Transverse colon (tissue), 4 donors: ENCODE measurements at regions of chr14 and their contacts with region 1.

Region 1: DNA sequence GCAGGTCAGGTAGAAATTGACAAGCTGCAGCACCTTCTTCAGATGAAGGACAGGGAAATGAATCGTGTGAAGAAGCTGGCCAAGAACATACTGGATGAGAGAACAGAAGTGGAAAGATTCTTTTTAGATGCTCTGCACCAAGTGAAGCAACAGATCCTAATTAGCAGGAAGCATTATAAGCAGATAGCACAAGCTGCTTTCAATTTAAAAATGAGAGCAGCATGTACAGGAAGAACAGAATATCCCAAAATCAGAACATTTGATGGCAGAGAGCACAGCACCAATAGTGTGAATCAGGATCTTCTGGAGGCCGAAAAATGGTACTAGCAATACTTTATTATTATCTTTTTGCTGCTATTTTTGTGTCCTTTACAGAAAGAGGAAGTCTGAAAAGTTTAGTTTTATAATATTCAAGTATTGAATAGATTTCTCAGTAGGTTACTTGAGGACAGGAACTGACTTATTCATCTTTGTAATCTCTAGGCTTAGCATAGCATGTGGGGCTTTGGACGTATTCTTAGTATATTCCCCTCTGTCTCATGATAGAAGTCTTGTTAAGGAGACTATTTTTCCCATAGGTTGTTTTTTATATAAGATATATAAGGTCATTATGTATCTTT is 30.8 kb downstream of the BBOF1 start:
- DNase-seq: no peak
- H3K4me3 ChIP-seq: no peak overlapping the region
- H3K27ac ChIP-seq: no peak overlapping the region
- H3K4me1 ChIP-seq: no peaks in the 10 kb centered on the region
- H3K27me3 ChIP-seq: no peaks in the 10 kb centered on the region
- CTCF ChIP-seq: no peak
- EP300 ChIP-seq: no peak
- POLR2A ChIP-seq: no peak

Region 2: GRCh38 chr14:74176400-74176793 is 126.4 kb after region 1 on chr14:
- in situ Hi-C with region 1: no loop called
- intact Hi-C with region 1: no loop called
- DNase-seq: no peak
- H3K4me3 ChIP-seq: no peak overlapping the region
- H3K27ac ChIP-seq: no peak overlapping the region
- H3K4me1 ChIP-seq: no peaks in the 10 kb centered on the region
- H3K27me3 ChIP-seq: no peaks in the 10 kb centered on the region
- CTCF ChIP-seq: no peak
- EP300 ChIP-seq: no peak
- POLR2A ChIP-seq: no peak

Region 3: GRCh38 chr14:74275241-74275841 is 225.4 kb after region 1 on chr14:
- in situ Hi-C with region 1: no loop called
- intact Hi-C with region 1: no loop called
- DNase-seq: no peak
- H3K4me3 ChIP-seq: no peak overlapping the region
- H3K27ac ChIP-seq: no peak overlapping the region
- H3K4me1 ChIP-seq: no peaks in the 10 kb centered on the region
- H3K27me3 ChIP-seq: peaks cover 11% of the 10 kb centered on the region
- CTCF ChIP-seq: no peak
- EP300 ChIP-seq: no peak
- POLR2A ChIP-seq: no peak

Region 4: DNA sequence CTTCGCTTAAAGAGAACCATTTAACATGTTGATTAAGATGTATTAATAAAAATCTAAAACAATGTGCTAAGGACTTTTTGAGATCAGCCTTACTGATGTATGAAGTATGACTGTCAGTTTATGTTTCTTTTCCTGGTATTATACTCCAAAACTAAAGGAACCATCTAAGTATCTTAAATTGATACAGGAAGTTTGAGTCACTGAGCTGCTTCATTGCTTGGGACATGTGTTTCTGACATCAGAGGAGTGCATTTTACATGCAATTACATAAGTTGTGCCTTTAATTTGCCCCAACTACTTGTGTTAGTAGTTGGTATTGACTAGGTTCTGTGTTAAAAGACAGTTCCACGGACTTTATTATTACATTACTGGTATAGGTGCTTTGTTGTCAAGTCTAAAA is 775.0 kb after region 1 on chr14:
- in situ Hi-C with region 1: no loop called
- intact Hi-C with region 1: loop called (anchors 10 kb)
- DNase-seq: no peak
- H3K4me3 ChIP-seq: no peak overlapping the region
- H3K27ac ChIP-seq: no peak overlapping the region
- H3K4me1 ChIP-seq: no peaks in the 10 kb centered on the region
- H3K27me3 ChIP-seq: no peaks in the 10 kb centered on the region
- CTCF ChIP-seq: no peak
- EP300 ChIP-seq: no peak
- POLR2A ChIP-seq: no peak